Panc1 (cell line): ENCODE measurements at regions of chr14 and their contacts with region 1.

Region 1: DNA sequence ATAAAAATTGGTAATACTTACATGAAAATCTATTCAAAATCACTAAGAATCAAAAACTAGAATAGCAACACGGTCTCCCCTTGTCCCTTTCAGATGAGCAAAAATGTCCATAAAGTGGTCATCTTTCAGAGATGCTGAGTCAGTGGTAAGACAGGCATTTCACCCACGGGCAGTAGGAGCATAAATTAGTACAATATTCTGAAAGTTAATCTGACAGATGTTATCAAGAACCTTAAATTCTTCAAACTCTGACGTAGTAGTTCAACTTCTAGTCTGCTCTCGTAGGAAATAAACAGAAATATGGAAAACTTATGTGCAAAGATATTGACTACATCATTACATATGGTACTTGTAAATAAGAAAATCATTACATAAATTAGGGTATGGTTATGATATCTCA is 33.1 kb upstream of the GNPNAT1 start:
- DNase-seq: no peak
- ATAC-seq: no peak
- H3K4me3 ChIP-seq: no peak overlapping the region
- H3K27ac ChIP-seq: no peak overlapping the region
- H3K4me1 ChIP-seq: no peaks in the 10 kb centered on the region
- H3K27me3 ChIP-seq: no peaks in the 10 kb centered on the region
- CTCF ChIP-seq: no peak

Region 2: DNA sequence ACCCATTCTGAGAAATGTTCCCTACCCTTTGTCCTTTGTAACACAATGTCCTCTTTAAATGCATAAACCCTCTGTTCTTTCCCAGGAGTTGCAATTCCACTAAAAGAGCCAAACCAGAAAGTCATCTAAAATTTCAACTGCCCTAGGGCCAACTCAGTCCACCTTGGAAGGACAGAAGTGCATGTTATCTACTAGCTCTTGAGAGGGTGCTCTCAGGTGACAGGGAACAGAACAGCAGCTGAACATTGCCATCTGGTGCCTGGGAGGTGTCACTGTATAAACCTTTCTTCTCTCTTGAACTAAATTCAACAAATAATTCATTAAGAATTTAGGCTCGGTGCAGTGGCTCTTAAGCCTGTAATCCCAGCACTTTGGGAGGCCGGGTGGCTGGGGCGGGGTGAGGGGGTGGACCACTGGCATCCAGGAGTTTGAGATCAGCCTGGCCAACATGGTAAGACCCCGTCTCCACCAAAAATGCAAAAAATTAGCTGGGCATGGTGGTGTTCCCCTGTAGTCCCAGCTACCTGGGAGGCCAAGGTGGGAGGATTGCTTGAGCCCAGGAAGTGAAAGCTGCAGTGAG is 136.6 kb after region 1 on chr14:
- CTCF ChIA-PET with region 1: interaction called, 3 read pairs
- POLR2A ChIA-PET with region 1: no interaction called
- in situ Hi-C with region 1: no loop called
- intact Hi-C with region 1: loop called (anchors 5 kb)
- DNase-seq: no peak
- ATAC-seq: peak; percentile 93
- H3K4me3 ChIP-seq: no peak overlapping the region
- H3K27ac ChIP-seq: no peak overlapping the region
- H3K4me1 ChIP-seq: no peaks in the 10 kb centered on the region
- H3K27me3 ChIP-seq: no peaks in the 10 kb centered on the region
- CTCF ChIP-seq: peak; percentile 73

Region 3: GRCh38 chr14:53047307-53048069 is 223.0 kb after region 1 on chr14:
- CTCF ChIA-PET with region 1: no interaction called
- POLR2A ChIA-PET with region 1: no interaction called
- in situ Hi-C with region 1: no loop called
- intact Hi-C with region 1: loop called (anchors 5 kb)
- DNase-seq: no peak
- ATAC-seq: no peak
- H3K4me3 ChIP-seq: no peak overlapping the region
- H3K27ac ChIP-seq: no peak overlapping the region
- H3K4me1 ChIP-seq: no peaks in the 10 kb centered on the region
- H3K27me3 ChIP-seq: no peaks in the 10 kb centered on the region
- CTCF ChIP-seq: no peak

Region 4: GRCh38 chr14:53306267-53306721 is 481.8 kb after region 1 on chr14:
- CTCF ChIA-PET with region 1: no interaction called
- POLR2A ChIA-PET with region 1: no interaction called
- in situ Hi-C with region 1: no loop called
- intact Hi-C with region 1: loop called (anchors 5 kb)
- DNase-seq: peak; percentile 5
- ATAC-seq: no peak; the same call in 1 of the 2 replicates
- H3K4me3 ChIP-seq: peak overlapping the region; percentile 36 to 46
- H3K27ac ChIP-seq: no peak overlapping the region
- H3K4me1 ChIP-seq: no peaks in the 10 kb centered on the region
- H3K27me3 ChIP-seq: no peaks in the 10 kb centered on the region
- CTCF ChIP-seq: peak; percentile 79